Common myeloid progenitor, CD34-positive (primary cell): ENCODE measurements at regions of chr9 and their contacts with region 1.

Region 1: DNA sequence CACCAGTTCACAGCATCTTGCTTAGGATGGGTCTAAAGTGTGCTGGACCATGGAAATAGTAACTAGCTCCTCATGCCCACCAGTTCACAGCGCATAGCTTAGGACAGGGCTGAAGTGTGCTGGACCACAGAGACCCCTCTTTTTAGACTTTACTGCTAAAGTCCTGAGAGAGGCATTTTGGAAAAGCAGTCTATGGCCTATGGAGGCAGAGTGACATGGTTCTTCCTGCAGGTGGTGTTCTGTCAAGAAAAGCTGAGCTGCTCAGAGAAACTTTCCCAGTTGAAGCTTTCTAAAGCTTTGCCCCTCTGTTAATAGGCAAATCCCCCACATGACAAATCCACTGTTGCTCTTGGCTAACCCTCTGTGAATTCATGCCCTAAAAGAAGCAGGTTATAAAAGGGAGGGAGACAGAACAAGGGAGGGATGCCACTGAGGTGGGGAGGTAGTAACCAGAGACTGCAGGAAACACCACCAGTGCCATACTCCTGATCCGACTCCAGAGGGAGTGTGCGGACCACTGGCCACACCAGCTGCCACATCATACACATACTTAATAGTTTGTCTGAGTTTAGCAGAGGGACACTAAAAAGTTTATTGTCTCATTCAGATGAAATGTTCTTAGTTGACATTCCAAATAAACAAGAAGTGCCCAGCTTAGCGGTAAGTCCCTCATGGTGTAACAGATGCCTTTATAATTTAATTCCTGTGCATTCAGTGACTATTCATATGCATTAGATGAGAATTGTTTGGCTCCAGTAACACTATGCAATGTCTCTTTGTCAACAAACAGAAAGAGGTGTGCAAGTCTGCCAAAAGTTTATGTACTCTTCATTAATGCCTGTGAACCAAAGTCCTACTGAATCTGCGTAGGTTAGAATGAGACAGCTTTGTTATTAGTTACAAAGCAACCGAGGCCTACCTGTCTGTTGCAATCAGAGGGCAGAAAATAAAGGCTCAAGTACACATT is 236.2 kb upstream of the NFIL3 start:
- DNase-seq: peak; percentile 26 to 55 (median 50)
- H3K4me3 ChIP-seq: no peak overlapping the region
- H3K27ac ChIP-seq: no peak overlapping the region
- H3K4me1 ChIP-seq: no peaks in the 10 kb centered on the region
- H3K27me3 ChIP-seq: peaks cover 0 to 5% (median 3%) of the 10 kb centered on the region in 5 experiments

Region 2: GRCh38 chr9:91580136-91580535 is 79.7 kb before region 1 on chr9:
- CTCF ChIA-PET with region 1: no interaction called
- POLR2A ChIA-PET with region 1: no interaction called
- DNase-seq: peak; percentile 3 to 21 (median 8)
- H3K4me3 ChIP-seq: no peak overlapping the region
- H3K27ac ChIP-seq: no peak overlapping the region
- H3K4me1 ChIP-seq: no peaks in the 10 kb centered on the region
- H3K27me3 ChIP-seq: peaks cover 0 to 14% (median 9%) of the 10 kb centered on the region in 5 experiments

Region 3: DNA sequence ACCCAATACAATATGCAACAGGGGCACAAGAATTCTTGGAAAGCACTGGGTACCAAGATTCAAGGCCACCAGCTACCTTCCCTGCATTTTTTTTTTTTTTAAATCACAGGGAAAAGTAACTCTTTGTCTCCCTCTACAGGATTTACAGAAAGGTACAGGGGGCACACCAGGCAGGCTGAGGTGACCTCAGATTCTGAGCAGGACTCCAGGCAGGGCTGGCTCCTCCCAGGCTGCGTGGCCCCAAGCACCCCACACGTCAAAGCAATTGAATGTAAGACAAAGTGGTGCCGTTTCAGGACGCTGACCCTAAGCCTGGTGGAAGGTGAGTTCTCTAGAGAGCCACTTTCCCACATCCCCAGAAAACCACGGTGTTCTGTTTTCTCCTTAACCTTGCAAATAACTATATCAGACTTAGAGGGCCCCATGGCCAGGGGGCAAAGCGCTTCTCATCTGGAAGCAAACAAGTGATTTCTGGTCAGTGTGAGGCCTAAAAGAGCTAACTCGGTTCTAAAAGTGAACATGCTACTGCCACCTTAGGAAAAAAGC is 67.6 kb after region 1 on chr9:
- CTCF ChIA-PET with region 1: interaction called, 10 read pairs
- POLR2A ChIA-PET with region 1: no interaction called
- DNase-seq: peak; percentile 53 to 64 (median 59)
- H3K4me3 ChIP-seq: no peak overlapping the region
- H3K27ac ChIP-seq: no peak overlapping the region
- H3K4me1 ChIP-seq: no peaks in the 10 kb centered on the region
- H3K27me3 ChIP-seq: no peaks in the 10 kb centered on the region